ENCODE measurements at regions of chrX and their contacts with region 1.

Region 1: DNA sequence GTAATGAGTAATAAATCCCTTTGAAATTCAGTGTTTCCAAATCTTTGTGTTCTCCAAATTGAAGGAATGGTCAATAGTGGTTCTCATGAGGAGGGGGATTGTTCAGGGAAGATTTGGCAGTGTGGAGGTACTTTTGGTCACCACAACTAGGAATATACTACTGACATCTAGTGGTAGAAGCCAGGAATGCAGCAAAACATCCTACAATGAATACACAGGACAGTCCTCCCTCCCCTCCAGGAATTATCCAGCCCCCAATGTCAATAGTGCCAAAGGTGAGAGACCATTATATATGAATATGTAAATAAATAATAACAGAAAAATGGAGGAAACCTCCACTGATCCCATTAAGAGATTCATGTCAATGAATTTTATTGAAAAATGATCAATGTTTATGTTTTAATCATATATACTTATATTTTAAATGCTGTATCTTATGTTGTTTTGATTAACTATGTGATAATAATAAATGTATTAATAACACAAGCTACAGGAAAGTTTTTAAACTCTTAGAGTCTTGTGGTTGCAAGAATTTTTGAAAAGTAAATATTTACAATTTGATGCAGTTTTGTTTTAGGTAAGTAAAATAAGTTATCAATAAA is 14.4 kb upstream of the FAM9A start:
- DNase-seq: no peak
- ATAC-seq: no peak
- H3K4me3 ChIP-seq: no peak overlapping the region
- H3K27ac ChIP-seq: no peak overlapping the region
- H3K4me1 ChIP-seq: no peaks in the 10 kb centered on the region
- H3K27me3 ChIP-seq: peaks cover 0 to 7% (median 0%) of the 10 kb centered on the region in 3 donors
- CTCF ChIP-seq: peak; percentile 78

Region 2: DNA sequence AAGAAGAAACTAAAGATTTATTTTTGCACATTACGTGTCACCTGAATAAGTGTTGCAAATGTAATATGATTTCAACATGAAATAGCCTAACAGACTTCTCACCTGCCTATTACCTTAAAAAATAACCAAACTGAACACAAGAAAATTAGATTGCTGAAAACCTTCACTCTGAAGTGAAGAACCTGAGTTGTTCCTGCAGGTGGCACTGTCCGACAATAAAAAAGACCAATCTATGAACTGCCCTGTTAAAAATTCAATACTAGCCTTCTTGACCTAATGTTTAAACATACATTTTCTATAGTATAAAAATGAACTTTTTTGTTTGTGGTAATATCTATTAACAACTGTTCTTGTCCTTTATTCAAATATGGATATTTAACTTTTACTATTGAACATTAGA is 819.2 kb before region 1 on chrX:
- intact Hi-C with region 1: loop called (anchors 5 to 10 kb)
- DNase-seq: no peak
- ATAC-seq: peak in 1 of 4 donors; percentile 66
- H3K4me3 ChIP-seq: no peak overlapping the region
- H3K27ac ChIP-seq: no peak overlapping the region
- H3K4me1 ChIP-seq: no peaks in the 10 kb centered on the region
- H3K27me3 ChIP-seq: no peaks in the 10 kb centered on the region
- CTCF ChIP-seq: peak; percentile 70

Region 3: DNA sequence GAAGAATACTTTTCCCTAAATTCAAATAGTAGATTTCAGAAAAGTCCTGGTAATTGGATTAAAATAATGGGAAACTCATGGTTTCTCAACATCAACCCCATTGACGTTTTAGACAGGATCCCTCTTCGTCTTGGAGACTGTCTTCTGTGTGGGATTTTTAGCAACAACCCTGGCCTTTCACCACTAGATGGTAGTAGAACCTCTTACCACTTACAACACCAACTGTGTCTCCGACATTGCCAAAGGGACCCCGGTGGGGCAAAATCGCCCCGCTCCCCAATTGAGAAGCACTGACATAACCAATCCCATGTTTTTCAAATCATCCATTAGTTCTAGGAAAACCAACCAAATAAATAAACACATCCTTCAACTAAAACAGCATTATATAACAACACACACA is 66.7 kb before region 1 on chrX:
- intact Hi-C with region 1: loop called (anchors 2 to 10 kb)
- DNase-seq: no peak
- ATAC-seq: peak in 1 of 4 donors; percentile 64
- H3K4me3 ChIP-seq: no peak overlapping the region
- H3K27ac ChIP-seq: no peak overlapping the region
- H3K4me1 ChIP-seq: no peaks in the 10 kb centered on the region
- H3K27me3 ChIP-seq: no peaks in the 10 kb centered on the region
- CTCF ChIP-seq: peak; percentile 54